Mammary epithelial cell (primary cell): ENCODE measurements at regions of chr16 and their contacts with region 1.

Region 1: GRCh38 chr16:54929090-54930004 is 1.3 kb upstream of the IRX5 start:
- DNase-seq: peak; percentile 99
- H3K4me3 ChIP-seq: peak overlapping the region; percentile 71 to 78 (median 72)
- H3K27ac ChIP-seq: peak overlapping the region; percentile 86
- H3K4me1 ChIP-seq: peaks cover 17% of the 10 kb centered on the region
- H3K27me3 ChIP-seq: no peaks in the 10 kb centered on the region
- CTCF ChIP-seq: peak in 1 of 2 donors; percentile 46

Region 2: GRCh38 chr16:53773150-53773846 is 1156.0 kb before region 1 on chr16:
- CTCF ChIA-PET with region 1: no interaction called
- dilution Hi-C with region 1: loop called (anchors 10 kb)
- in situ Hi-C with region 1: loop called in 1 of 2 experiments (anchors 10 kb)
- intact Hi-C with region 1: loop called (anchors 5 kb)
- DNase-seq: peak; percentile 72
- H3K4me3 ChIP-seq: no peak overlapping the region
- H3K27ac ChIP-seq: peak overlapping the region; percentile 11
- H3K4me1 ChIP-seq: peaks cover 60% of the 10 kb centered on the region
- H3K27me3 ChIP-seq: no peaks in the 10 kb centered on the region
- CTCF ChIP-seq: peak; percentile 70 to 81

Region 3: DNA sequence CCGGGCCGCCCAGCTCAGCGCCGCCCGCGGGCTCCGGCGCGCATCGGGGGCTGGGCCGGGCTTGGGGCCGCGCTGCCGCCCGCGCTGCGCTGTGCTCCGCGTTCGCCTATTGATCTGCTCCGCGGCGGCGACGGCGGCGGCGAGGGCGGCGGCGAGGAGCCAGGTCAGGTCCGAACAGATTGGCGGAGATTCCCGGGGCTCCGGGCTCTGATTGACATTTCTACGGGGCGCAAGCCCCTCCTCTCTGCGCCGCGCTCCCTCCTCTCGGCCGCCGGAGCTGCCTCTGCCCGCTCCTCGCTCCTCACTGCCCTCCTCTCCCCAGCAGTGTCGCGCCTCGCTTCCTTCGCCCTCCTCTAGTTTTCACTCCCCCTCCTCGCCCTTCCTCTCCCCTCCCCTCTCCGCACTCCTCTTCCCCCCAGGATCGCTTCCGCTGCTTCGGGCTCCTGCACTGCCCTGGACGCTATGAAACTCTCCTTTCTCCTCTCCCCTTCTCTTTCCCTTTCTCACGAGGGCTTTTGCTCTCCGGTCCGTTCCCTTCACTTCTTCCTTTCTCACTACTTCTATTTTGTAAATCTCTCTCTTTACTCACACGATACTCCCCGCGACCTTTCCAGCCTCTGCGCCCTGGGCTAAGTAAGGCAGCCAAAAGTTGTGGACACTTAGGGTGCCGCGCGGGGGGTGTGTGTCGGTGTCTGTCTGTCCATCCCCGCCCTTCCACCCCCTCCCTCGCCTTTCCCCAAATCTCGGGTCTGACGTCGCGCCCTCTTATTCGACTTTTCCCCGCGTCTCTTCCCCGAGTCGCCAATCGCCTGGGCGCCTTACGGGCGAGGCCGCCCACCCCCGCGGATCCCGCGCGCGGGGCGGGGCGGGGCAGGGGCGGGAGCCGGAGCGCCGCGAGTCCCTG is 643.0 kb before region 1 on chr16 and contains the start of gene IRX3:
- CTCF ChIA-PET with region 1: no interaction called
- dilution Hi-C with region 1: loop called (anchors 25 kb)
- in situ Hi-C with region 1: loop called (anchors 5 to 10 kb)
- intact Hi-C with region 1: loop called (anchors 1 kb)
- DNase-seq: peak; percentile 94
- H3K4me3 ChIP-seq: peak within 1 kb of the TSS; percentile 66 to 85 (median 80)
- H3K27ac ChIP-seq: peak within 1 kb of the TSS; percentile 74
- H3K4me1 ChIP-seq: peaks cover 30% of the 10 kb centered on the region
- H3K27me3 ChIP-seq: no peaks in the 10 kb centered on the region
- CTCF ChIP-seq: no peak
- total RNA-seq, gene IRX3: 7.2 to 15.5 TPM

Region 4: GRCh38 chr16:54484700-54485099 is 444.6 kb before region 1 on chr16:
- CTCF ChIA-PET with region 1: no interaction called
- dilution Hi-C with region 1: no loop called
- in situ Hi-C with region 1: no loop called
- intact Hi-C with region 1: no loop called
- DNase-seq: no peak
- H3K4me3 ChIP-seq: no peak overlapping the region
- H3K27ac ChIP-seq: no peak overlapping the region
- H3K4me1 ChIP-seq: no peaks in the 10 kb centered on the region
- H3K27me3 ChIP-seq: peaks cover 4% of the 10 kb centered on the region
- CTCF ChIP-seq: no peak

Region 5: GRCh38 chr16:54647725-54648221 is 281.6 kb before region 1 on chr16:
- CTCF ChIA-PET with region 1: no interaction called
- dilution Hi-C with region 1: no loop called
- in situ Hi-C with region 1: loop called in 1 of 2 experiments (anchors 5 kb)
- intact Hi-C with region 1: no loop called
- DNase-seq: peak; percentile 84
- H3K4me3 ChIP-seq: peak overlapping the region in 1 of 3 experiments; percentile 16
- H3K27ac ChIP-seq: peak overlapping the region; percentile 91
- H3K4me1 ChIP-seq: peaks cover 40% of the 10 kb centered on the region
- H3K27me3 ChIP-seq: no peaks in the 10 kb centered on the region
- CTCF ChIP-seq: no peak

Region 6: DNA sequence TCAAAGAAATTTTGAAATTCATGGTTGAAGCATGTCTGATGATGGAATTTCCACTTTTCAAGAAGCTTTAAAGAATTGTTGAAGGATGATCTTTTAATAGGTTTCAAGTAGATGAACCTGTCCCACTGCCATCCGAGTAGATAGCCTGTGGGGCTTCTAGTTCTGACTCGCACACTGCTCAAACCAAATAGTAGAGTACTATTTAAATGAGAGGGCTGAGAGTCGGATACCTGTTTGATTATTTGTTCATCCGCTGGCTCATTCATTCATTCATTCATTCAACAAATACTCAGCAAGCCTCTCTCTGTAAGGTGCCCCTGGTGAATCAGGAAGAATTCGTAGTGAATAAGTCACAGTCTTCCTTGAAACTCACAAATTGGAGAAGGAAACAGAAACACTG is 106.9 kb before region 1 on chr16:
- CTCF ChIA-PET with region 1: no interaction called
- dilution Hi-C with region 1: loop called (anchors 10 kb)
- in situ Hi-C with region 1: no loop called
- intact Hi-C with region 1: loop called (anchors 1 kb)
- DNase-seq: peak; percentile 62
- H3K4me3 ChIP-seq: no peak overlapping the region
- H3K27ac ChIP-seq: no peak overlapping the region
- H3K4me1 ChIP-seq: peaks cover 3% of the 10 kb centered on the region
- H3K27me3 ChIP-seq: no peaks in the 10 kb centered on the region
- CTCF ChIP-seq: no peak